Right ventricle myocardium superior (tissue), 1 donor: ENCODE measurements at regions of chr20 and their contacts with region 1.

Region 1: GRCh38 chr20:48620519-48621254 is 207.1 kb downstream of the PREX1 start:
- DNase-seq: peak; percentile 91
- ATAC-seq: peak; percentile 95

Region 2: DNA sequence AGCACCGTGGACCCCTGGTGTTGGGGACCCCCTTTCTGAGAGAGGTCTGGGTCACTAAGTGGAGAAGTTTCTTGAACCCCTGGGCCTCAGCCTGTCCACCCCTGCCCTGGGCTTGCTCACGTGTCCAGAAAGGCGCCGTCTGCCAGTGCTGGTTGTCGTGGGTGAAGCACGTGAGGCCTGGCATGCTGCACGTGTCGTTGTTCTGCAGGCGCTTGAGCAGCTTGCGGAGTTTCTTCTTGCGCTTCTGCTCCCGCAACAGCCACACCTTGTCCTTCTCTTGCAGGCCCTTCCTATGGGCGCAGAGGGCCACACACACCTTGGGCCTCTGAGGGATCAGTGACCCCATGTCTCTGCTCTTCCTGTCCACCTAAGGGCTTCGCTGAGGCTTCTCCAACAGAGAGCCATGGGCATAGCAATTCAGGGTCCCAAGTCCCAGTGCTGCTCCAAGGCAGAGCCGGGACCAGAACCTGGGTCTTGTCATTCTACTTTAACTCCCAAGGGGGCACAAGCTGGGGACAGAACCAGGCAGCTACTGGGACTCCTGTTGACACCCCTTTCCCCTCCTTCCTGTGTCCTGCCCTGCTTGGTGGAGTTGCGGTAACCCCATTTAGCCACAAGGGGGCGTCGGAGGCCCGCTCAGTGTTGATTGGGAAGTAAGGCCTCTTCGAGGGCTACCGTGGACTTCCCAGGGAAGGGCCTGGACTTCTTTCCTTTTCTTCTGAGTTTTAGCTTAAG is 957.2 kb before region 1 on chr20:
- intact Hi-C with region 1: loop called (anchors 5 kb)
- DNase-seq: peak; percentile 84
- ATAC-seq: peak; percentile 89

Region 3: GRCh38 chr20:47677635-47678453 is 942.8 kb before region 1 on chr20:
- intact Hi-C with region 1: loop called (anchors 5 kb)
- DNase-seq: no peak
- ATAC-seq: no peak

Region 4: DNA sequence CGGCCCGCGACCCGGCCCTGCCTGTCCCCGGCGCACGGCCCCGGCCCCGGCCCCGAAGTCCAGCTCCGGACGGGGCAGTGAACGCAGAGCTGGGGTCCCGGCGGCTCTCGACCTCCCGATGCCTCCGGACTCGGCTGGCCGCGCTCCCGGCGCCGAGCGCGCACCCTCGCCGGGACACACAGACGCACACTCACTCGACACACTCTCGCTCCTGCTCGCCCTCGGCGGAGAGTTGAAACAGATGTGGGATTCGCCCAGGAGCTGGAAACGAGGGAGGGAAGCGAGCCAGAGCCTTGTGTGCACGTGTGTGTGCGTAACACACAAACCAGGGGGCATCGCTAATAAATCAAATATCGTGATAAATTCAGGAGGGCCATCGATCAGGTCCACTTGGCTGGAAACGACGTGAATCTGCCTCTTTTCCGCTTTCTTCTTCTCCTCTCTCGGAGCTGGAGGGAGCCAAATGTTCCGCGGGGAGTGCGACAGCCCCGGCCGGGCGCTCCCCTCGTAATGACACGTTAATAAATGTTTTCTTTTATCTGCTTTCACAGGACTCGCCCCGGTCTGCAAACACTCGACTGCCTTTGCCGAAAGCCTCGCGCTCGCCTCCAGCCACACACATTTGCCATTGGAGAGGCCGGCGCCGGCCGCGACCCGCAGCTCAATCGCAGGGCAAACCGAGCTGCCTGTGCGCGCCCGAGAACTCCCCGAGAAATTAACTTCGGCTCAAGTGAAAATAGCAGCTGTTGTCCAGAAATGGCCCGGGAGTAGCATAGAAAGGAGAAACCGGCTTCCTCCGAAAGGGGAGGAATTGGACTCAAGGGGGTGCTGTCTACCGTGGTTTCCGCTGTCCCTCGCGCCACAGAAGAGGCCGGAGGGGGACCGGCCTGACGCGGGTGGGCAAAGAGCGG is 834.6 kb before region 1 on chr20:
- intact Hi-C with region 1: loop called (anchors 2 kb)
- DNase-seq: peak; percentile 72
- ATAC-seq: peak; percentile 89